ENCODE measurements at regions of chr3 and their contacts with region 1.

Region 1: DNA sequence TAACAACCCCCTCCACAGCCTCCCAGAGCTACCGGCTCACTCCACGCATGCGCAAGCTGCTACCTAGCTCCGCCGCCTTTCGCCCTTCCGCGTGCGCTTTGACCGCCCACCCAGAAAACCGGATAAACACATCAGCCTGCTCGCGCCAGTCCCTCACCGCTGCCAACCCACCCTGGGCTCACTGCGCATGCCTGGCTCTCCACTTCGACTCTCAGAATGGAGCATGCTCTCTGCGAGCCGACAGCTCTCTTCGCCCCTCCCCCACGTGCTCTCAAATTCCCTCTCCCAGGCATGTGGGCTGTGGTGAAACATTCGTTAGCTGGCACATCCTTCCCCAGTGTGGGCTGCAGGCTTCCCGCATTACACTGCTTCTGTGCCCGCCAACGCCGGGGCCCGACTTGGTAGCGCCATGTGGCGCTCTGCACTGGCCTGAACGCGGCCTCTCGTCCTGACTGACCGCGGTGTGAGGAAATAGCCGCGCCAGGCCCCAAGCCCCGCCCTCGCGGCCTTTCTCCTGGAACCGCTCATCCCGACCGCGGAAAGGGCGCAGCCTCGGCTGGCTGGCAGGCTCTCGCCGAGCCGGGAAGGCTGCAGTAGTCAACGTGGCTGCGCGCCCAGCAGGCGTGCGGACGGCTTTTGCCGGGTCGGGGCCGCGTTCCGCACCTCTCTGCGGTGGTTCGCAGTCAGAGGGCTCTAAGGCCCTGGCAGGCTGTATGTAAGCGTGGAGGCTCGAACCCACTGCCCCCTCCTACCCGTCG is 445 bp upstream of the MSL2 start:
- H3K4me3 Mint-ChIP-seq: peak overlapping the region; percentile 91
- H3K27ac Mint-ChIP-seq: peak overlapping the region; percentile 94
- H3K4me1 Mint-ChIP-seq: peaks cover 36% of the 10 kb centered on the region
- H3K27me3 Mint-ChIP-seq: no peaks in the 10 kb centered on the region

Region 2: DNA sequence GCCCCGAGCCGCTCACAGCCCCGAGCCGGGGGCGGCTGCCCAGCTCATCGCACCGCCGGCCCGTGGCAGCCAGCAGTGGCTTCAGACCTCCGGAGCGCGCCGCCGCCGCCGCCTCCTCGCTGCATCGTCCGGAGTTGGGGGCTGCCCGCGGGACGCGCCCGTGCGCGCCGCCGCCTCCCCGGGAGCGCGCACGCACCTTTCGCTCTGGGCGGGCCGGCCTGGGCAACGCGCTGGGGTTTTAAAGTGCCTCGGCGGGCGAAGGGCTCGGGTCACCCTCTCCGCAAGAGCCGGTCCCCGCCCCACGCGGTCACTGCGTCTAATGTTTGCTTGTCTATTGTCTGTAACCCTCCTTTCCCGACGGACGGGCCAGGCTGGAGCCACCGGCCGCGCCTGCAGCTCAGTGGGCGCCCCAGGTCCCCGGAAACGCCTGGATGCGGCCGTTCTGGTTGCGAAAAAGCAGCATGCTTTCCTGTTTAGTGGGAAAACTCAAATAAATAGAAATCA is 1945.8 kb before region 1 on chr3 and contains the start of gene RYK:
- intact Hi-C with region 1: loop called (anchors 10 kb)
- H3K4me3 Mint-ChIP-seq: peak within 1 kb of the TSS; percentile 85
- H3K27ac Mint-ChIP-seq: peak within 1 kb of the TSS; percentile 88
- H3K4me1 Mint-ChIP-seq: peaks cover 78% of the 10 kb centered on the region
- H3K27me3 Mint-ChIP-seq: peaks cover 2% of the 10 kb centered on the region

Region 3: GRCh38 chr3:136217196-136217595 is 20.6 kb after region 1 on chr3:
- intact Hi-C with region 1: no loop called
- H3K4me3 Mint-ChIP-seq: no peak overlapping the region
- H3K27ac Mint-ChIP-seq: no peak overlapping the region
- H3K4me1 Mint-ChIP-seq: no peaks in the 10 kb centered on the region
- H3K27me3 Mint-ChIP-seq: no peaks in the 10 kb centered on the region

Region 4: GRCh38 chr3:136239094-136239493 is 42.5 kb after region 1 on chr3:
- intact Hi-C with region 1: loop called (anchors 5 kb)
- H3K4me3 Mint-ChIP-seq: no peak overlapping the region
- H3K27ac Mint-ChIP-seq: no peak overlapping the region
- H3K4me1 Mint-ChIP-seq: peaks cover 8% of the 10 kb centered on the region
- H3K27me3 Mint-ChIP-seq: no peaks in the 10 kb centered on the region

Region 5: GRCh38 chr3:136291302-136291701 is 94.7 kb after region 1 on chr3:
- intact Hi-C with region 1: no loop called
- H3K4me3 Mint-ChIP-seq: no peak overlapping the region
- H3K27ac Mint-ChIP-seq: peak overlapping the region; percentile 40
- H3K4me1 Mint-ChIP-seq: peaks cover 9% of the 10 kb centered on the region
- H3K27me3 Mint-ChIP-seq: no peaks in the 10 kb centered on the region

Region 6: DNA sequence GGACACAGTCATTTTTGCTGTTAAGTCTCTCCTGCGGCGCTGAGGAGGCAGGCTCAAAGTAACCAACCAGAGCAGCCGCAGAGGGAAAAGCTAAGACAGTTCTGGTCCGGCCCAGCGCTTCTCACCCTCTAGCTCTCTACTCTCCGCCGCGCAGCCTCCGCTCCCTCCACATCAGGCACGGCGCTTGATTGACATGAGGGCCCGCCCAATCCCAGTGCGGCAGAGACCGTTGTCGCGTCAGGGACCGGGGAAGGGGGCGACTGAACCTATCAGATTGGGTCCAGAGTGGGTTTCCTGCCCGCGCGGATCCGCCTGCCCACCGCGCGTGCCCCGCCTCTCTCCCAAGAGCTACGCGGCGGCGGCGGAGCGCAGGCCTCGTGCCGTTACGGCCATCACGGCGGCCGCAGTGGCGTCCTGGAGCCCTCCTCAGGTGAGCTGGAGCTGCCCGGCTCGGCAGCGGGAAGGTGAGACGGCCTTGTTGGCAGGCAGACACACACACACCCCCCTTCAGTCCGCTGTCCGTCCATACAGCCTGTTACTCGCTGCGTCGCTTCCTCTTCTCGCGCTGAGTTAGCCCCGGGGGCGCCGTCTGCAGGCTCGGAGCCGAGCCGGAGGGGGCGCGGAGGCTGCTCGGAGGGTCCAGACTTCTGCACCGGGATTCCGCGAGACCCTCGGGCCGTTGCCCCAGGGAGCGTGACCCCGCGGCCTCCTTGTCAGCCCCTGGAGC is 665.5 kb after region 1 on chr3 and contains the start of gene NCK1:
- intact Hi-C with region 1: loop called (anchors 10 kb)
- H3K4me3 Mint-ChIP-seq: peak within 1 kb of the TSS; percentile 97
- H3K27ac Mint-ChIP-seq: peak within 1 kb of the TSS; percentile 98
- H3K4me1 Mint-ChIP-seq: peaks cover 46% of the 10 kb centered on the region
- H3K27me3 Mint-ChIP-seq: no peaks in the 10 kb centered on the region

Region 7: GRCh38 chr3:138186803-138187295 is 1990.3 kb after region 1 on chr3:
- intact Hi-C with region 1: loop called (anchors 10 kb)
- H3K4me3 Mint-ChIP-seq: peak overlapping the region; percentile 94
- H3K27ac Mint-ChIP-seq: peak overlapping the region; percentile 97
- H3K4me1 Mint-ChIP-seq: peaks cover 36% of the 10 kb centered on the region
- H3K27me3 Mint-ChIP-seq: peaks cover 7% of the 10 kb centered on the region